T-cell (primary cell): ENCODE measurements at regions of chr10 and their contacts with region 1.

Region 1: GRCh38 chr10:96896884-96897589 is 64.9 kb downstream of the LCOR start:
- DNase-seq: no peak
- ATAC-seq: no peak
- H3K4me3 ChIP-seq: no peak overlapping the region
- H3K4me3 Mint-ChIP-seq: no peak overlapping the region
- H3K27ac ChIP-seq: no peak overlapping the region
- H3K27ac Mint-ChIP-seq: peak overlapping the region in 1 of 2 donors; percentile 5
- H3K4me1 ChIP-seq: peaks cover 3 to 6% of the 10 kb centered on the region in 2 experiments
- H3K4me1 Mint-ChIP-seq: peaks cover 57 to 64% (median 62%) of the 10 kb centered on the region in 3 donors
- H3K27me3 ChIP-seq: no peaks in the 10 kb centered on the region
- H3K27me3 Mint-ChIP-seq: no peaks in the 10 kb centered on the region

Region 2: GRCh38 chr10:96873756-96874467 is 23.1 kb before region 1 on chr10:
- CTCF ChIA-PET with region 1: no interaction called
- POLR2A ChIA-PET with region 1: interaction called in 1 of 2 experiments, 10 read pairs
- DNase-seq: no peak
- ATAC-seq: no peak
- H3K4me3 ChIP-seq: no peak overlapping the region
- H3K4me3 Mint-ChIP-seq: no peak overlapping the region
- H3K27ac ChIP-seq: no peak overlapping the region
- H3K27ac Mint-ChIP-seq: no peak overlapping the region
- H3K4me1 ChIP-seq: peaks cover 0 to 9% of the 10 kb centered on the region in 2 experiments
- H3K4me1 Mint-ChIP-seq: peaks cover 70 to 74% (median 71%) of the 10 kb centered on the region in 3 donors
- H3K27me3 ChIP-seq: no peaks in the 10 kb centered on the region
- H3K27me3 Mint-ChIP-seq: no peaks in the 10 kb centered on the region